Mammary epithelial cell (primary cell): ENCODE measurements at regions of chr1 and their contacts with region 1.

Region 1: DNA sequence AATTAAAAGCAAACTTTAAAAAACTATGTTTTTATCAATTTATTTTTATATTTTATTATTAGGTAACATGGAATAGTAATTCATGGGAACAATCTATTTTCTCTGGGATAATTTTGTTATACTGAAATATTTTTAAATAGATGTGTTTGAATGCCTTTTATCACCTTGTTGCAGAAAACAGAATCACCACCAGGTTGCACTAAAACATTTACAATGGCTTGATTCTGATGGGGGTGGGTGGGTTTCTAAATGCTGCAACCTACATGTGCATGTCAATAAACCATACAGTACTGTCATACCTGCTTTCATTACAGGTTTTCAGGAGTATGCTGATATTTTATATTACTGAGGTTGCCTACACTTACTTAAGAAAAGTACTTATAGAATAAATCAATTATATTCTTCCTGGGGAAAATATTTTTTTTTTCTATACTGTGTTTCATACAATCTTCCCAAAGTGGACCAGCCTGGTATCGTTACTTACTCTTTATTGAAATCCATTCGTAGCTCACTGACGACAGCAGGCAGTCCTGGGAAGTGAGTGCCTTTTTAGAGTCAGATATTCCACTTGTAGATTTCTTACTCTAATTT is 132.8 kb downstream of the PTPRC start:
- DNase-seq: no peak
- H3K4me3 ChIP-seq: no peak overlapping the region
- H3K27ac ChIP-seq: no peak overlapping the region
- H3K4me1 ChIP-seq: peaks cover 13% of the 10 kb centered on the region
- H3K27me3 ChIP-seq: no peaks in the 10 kb centered on the region
- CTCF ChIP-seq: peak; percentile 51 to 59

Region 2: GRCh38 chr1:198880818-198881597 is 109.3 kb after region 1 on chr1:
- CTCF ChIA-PET with region 1: no interaction called
- dilution Hi-C with region 1: no loop called
- in situ Hi-C with region 1: no loop called
- intact Hi-C with region 1: loop called (anchors 10 kb)
- DNase-seq: peak; percentile 87
- H3K4me3 ChIP-seq: no peak overlapping the region
- H3K27ac ChIP-seq: peak overlapping the region; percentile 58
- H3K4me1 ChIP-seq: peaks cover 8% of the 10 kb centered on the region
- H3K27me3 ChIP-seq: no peaks in the 10 kb centered on the region
- CTCF ChIP-seq: no peak

Region 3: DNA sequence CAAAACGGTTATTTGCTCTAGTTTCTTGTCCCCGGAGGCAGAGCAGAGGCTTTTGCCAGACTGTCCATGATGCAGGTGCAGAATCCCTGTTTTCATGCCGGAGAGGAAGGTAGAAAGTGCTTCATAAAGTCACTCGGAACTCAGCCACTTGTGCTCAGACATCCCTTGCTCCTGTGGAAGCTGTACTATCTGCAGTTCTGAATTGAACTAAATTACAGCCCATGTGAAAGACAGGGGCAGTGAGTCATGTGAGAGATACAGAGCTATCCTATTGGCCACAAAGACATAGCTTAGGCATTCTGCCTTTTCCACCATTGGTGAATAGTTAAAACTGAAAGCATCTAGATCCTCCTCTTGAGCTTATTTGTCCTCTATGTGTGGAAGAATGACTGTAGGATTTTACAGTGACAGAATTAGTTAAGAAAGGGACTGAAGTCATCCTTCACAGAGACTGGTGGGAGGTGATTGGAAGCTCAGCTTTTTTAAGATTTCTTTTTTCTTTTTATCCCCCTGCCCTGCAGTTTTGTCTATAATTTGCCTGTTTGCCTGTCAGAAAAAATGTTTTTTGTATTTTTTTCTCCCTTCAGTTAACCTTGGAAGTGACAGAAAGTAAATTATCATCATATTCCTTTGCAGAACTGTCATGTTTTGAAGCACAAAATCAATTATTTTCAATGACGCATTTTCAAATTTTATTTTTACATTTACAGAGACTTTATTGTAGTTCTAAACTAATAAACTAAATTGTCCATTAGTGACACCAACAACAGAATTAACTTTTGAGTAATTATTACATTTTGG is 165.8 kb after region 1 on chr1:
- CTCF ChIA-PET with region 1: no interaction called
- dilution Hi-C with region 1: no loop called
- in situ Hi-C with region 1: no loop called
- intact Hi-C with region 1: loop called (anchors 2 kb)
- DNase-seq: peak; percentile 91
- H3K4me3 ChIP-seq: peak overlapping the region; percentile 68 to 80 (median 79)
- H3K27ac ChIP-seq: peak overlapping the region; percentile 81
- H3K4me1 ChIP-seq: no peaks in the 10 kb centered on the region
- H3K27me3 ChIP-seq: no peaks in the 10 kb centered on the region
- CTCF ChIP-seq: no peak

Region 4: GRCh38 chr1:199046618-199047017 is 275.0 kb after region 1 on chr1:
- CTCF ChIA-PET with region 1: no interaction called
- dilution Hi-C with region 1: no loop called
- in situ Hi-C with region 1: no loop called
- intact Hi-C with region 1: loop called (anchors 1 kb)
- DNase-seq: no peak
- H3K4me3 ChIP-seq: no peak overlapping the region
- H3K27ac ChIP-seq: no peak overlapping the region
- H3K4me1 ChIP-seq: no peaks in the 10 kb centered on the region
- H3K27me3 ChIP-seq: peaks cover 1% of the 10 kb centered on the region
- CTCF ChIP-seq: peak; percentile 16 to 47

Region 5: GRCh38 chr1:199243423-199244061 is 471.9 kb after region 1 on chr1:
- CTCF ChIA-PET with region 1: no interaction called
- dilution Hi-C with region 1: no loop called
- in situ Hi-C with region 1: no loop called
- intact Hi-C with region 1: loop called (anchors 1 kb)
- DNase-seq: peak; percentile 26
- H3K4me3 ChIP-seq: no peak overlapping the region
- H3K27ac ChIP-seq: no peak overlapping the region
- H3K4me1 ChIP-seq: no peaks in the 10 kb centered on the region
- H3K27me3 ChIP-seq: no peaks in the 10 kb centered on the region
- CTCF ChIP-seq: peak; percentile 62 to 78

Region 6: GRCh38 chr1:199422198-199422597 is 650.5 kb after region 1 on chr1:
- CTCF ChIA-PET with region 1: no interaction called
- dilution Hi-C with region 1: no loop called
- in situ Hi-C with region 1: no loop called
- intact Hi-C with region 1: loop called (anchors 2 kb)
- DNase-seq: peak; percentile 45
- H3K4me3 ChIP-seq: no peak overlapping the region
- H3K27ac ChIP-seq: no peak overlapping the region
- H3K4me1 ChIP-seq: no peaks in the 10 kb centered on the region
- H3K27me3 ChIP-seq: no peaks in the 10 kb centered on the region
- CTCF ChIP-seq: peak; percentile 44 to 69

Region 7: GRCh38 chr1:199463521-199464128 is 692.0 kb after region 1 on chr1:
- CTCF ChIA-PET with region 1: no interaction called
- dilution Hi-C with region 1: no loop called
- in situ Hi-C with region 1: loop called (anchors 25 kb)
- intact Hi-C with region 1: loop called (anchors 1 kb)
- DNase-seq: peak; percentile 45
- H3K4me3 ChIP-seq: no peak overlapping the region
- H3K27ac ChIP-seq: no peak overlapping the region
- H3K4me1 ChIP-seq: no peaks in the 10 kb centered on the region
- H3K27me3 ChIP-seq: peaks cover 3% of the 10 kb centered on the region
- CTCF ChIP-seq: peak; percentile 78 to 80